RWPE1 (cell line): ENCODE measurements at regions of chr16 and their contacts with region 1.

Region 1: GRCh38 chr16:52912565-52913173 is 140.0 kb downstream of the CHD9NB start:
- DNase-seq: peak; percentile 66
- H3K27ac ChIP-seq: no peak overlapping the region
- CTCF ChIP-seq: peak; percentile 84

Region 2: DNA sequence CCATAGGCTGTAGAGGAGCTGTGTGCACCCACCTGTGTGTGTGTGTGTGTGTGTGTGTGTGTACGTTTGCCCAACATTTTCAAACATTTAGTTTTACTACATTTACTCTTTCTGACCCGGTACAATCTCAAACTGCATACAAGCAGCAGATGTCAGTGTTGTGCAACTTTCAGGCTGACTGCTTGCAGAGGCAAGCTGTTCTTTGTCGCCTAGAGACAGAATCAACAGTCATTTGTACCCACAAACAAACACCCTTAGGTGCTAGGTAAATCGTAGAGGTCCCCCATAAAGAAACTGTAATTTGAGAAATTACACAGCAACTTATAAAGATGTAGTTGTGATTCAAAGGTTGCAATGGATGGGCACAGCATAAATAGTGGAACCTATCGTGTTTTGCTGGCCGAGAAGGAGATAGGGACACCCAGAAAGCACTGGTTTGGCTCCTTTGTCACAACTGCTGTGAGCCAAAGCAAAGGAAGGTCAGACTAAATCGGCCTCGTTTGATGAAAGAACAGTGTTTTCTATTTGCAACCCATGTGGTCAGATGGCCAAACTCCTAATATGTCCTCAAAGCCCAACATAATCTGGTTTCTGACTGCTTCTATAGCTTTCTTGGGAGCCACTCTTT is 844.1 kb before region 1 on chr16:
- CTCF ChIA-PET with region 1: interaction called, 21 read pairs
- POLR2A ChIA-PET with region 1: no interaction called
- DNase-seq: peak; percentile 9
- H3K27ac ChIP-seq: no peak overlapping the region
- CTCF ChIP-seq: peak; percentile 52

Region 3: DNA sequence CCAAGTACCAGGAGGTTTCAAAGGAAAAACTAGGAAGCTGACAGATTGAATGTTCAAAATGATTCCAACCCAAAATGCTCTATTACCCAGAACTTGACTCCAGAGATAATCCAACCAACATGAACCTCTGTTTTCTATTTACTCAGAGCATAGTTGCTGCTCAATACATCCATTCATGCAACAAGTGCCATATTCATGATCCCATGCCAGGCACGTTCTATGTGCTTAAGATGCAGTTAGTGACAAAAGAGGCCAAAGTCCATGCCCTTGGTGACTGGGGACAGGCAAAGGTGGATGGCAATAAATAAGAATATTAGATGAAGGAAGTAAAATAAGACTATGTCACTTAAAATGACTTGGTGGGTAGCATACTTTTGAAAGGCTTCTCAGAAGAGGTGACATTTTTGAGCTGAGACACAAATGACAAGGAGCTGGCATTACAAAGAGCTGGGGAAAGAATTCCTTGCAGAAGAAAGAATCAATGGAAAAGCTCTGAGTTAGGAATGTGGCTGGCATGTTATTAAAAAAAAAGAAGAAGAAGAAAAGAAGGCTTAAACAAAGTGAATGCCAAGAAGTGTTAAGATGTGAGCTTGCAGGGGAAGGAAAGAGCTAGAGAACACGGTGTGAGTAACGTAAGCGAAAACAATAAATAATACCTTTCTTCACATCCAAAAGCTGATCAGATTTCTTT is 400.2 kb before region 1 on chr16:
- CTCF ChIA-PET with region 1: no interaction called
- POLR2A ChIA-PET with region 1: no interaction called
- DNase-seq: no peak
- H3K27ac ChIP-seq: no peak overlapping the region
- CTCF ChIP-seq: no peak

Region 4: DNA sequence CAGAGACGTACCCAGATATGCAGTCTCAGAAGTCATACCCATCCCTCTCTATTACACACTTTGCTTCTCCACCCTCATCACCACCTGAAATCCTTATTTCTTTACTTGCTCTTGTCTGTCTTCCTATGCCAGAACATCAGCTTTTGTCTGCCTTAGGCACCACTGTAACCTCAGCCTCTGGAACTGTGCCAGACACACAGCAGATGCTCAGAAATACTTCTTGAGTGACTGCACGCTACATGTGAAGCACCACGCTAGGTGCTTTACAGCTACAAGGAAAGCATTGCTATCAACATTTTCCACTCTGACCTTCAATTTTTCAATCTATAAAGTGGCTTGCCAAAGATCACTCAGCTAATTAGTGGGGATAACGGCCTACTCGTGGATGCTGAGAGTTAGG is 86.8 kb before region 1 on chr16:
- CTCF ChIA-PET with region 1: no interaction called
- POLR2A ChIA-PET with region 1: no interaction called
- DNase-seq: no peak
- H3K27ac ChIP-seq: no peak overlapping the region
- CTCF ChIP-seq: no peak

Region 5: GRCh38 chr16:52896484-52897164 is 16.0 kb before region 1 on chr16:
- CTCF ChIA-PET with region 1: no interaction called
- POLR2A ChIA-PET with region 1: no interaction called
- DNase-seq: no peak
- H3K27ac ChIP-seq: no peak overlapping the region
- CTCF ChIP-seq: no peak